ENCODE measurements at regions of chr6 and their contacts with region 1.

Region 1: DNA sequence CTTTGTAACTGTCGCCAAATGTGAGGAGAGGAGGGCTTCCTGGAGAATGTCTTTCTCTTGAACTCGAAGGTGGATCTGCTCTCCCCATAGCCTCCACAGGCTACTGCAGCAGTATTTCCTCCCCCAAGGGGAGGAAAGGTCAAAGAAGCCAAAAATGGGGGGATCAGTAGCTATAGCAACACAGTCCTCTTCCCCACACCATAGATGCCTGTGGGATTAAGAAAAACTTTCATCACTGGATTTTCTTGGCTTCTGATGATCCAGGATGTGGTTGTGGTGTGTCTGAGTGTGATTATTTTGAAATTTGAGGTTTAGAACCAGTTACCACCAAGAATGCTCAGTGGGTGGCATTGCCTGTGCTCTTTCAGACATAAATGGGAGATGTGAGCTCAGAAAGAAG is 140.1 kb upstream of the SPACA1 start:
- DNase-seq: peak; percentile 63
- ATAC-seq: peak; percentile 77
- H3K4me3 ChIP-seq: no peak overlapping the region
- H3K27ac ChIP-seq: peak overlapping the region; percentile 50; the same call in 1 of the 2 replicates
- H3K4me1 ChIP-seq: peaks cover 55% of the 10 kb centered on the region
- H3K27me3 ChIP-seq: no peaks in the 10 kb centered on the region
- CTCF ChIP-seq: no peak
- EP300 ChIP-seq: peak in 1 of 2 experiments; percentile 66; a peak in 2 of 4 replicates
- POLR2A ChIP-seq: no peak
- RAD21 ChIP-seq: 0 out of 2 replicates have a peak, but pooled peaks have one; percentile 6

Region 2: GRCh38 chr6:87808005-87808757 is 99.3 kb before region 1 on chr6:
- CTCF ChIA-PET with region 1: no interaction called
- POLR2A ChIA-PET with region 1: no interaction called
- RAD21 ChIA-PET with region 1: interaction called, 6 read pairs
- SMC1A ChIA-PET with region 1: interaction called, 10 read pairs
- in situ Hi-C with region 1: no loop called
- intact Hi-C with region 1: no loop called
- DNase-seq: no peak
- ATAC-seq: peak; percentile 45
- H3K4me3 ChIP-seq: no peak overlapping the region
- H3K27ac ChIP-seq: peak overlapping the region; percentile 43
- H3K4me1 ChIP-seq: peaks cover 27% of the 10 kb centered on the region
- H3K27me3 ChIP-seq: no peaks in the 10 kb centered on the region
- CTCF ChIP-seq: no peak
- EP300 ChIP-seq: no peak
- POLR2A ChIP-seq: no peak
- RAD21 ChIP-seq: no peak

Region 3: GRCh38 chr6:87887266-87887665 is 20.3 kb before region 1 on chr6:
- CTCF ChIA-PET with region 1: interaction called, 3 read pairs
- POLR2A ChIA-PET with region 1: interaction called, 4 read pairs
- RAD21 ChIA-PET with region 1: interaction called, 4 read pairs
- SMC1A ChIA-PET with region 1: interaction called, 11 read pairs
- in situ Hi-C with region 1: no loop called
- intact Hi-C with region 1: no loop called
- DNase-seq: no peak
- ATAC-seq: no peak
- H3K4me3 ChIP-seq: no peak overlapping the region
- H3K27ac ChIP-seq: no peak overlapping the region
- H3K4me1 ChIP-seq: no peaks in the 10 kb centered on the region
- H3K27me3 ChIP-seq: no peaks in the 10 kb centered on the region
- CTCF ChIP-seq: no peak
- EP300 ChIP-seq: no peak
- POLR2A ChIP-seq: no peak
- RAD21 ChIP-seq: no peak

Region 4: DNA sequence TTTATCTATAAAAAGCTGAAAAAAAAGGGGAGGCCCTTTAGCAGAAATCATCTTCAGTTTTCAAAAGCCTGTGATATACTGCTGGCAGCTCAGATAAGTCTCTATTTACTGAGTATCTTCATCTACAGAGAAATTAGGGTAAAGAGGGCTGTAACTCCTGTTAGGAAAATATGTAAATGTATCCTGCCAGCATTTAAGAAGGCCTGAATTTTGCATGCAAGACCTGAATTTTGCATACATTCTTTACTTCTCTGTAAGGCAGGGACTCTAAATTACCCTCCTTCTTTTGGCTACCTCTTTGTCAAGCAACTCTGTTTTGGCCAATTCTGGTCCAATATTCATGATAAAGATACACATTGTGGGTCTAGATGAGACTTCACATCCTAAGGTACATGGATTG is 10.5 kb before region 1 on chr6:
- CTCF ChIA-PET with region 1: no interaction called
- POLR2A ChIA-PET with region 1: interaction called, 4 read pairs
- RAD21 ChIA-PET with region 1: no interaction called
- SMC1A ChIA-PET with region 1: interaction called, 203 read pairs
- in situ Hi-C with region 1: no loop called
- intact Hi-C with region 1: no loop called
- DNase-seq: no peak
- ATAC-seq: no peak
- H3K4me3 ChIP-seq: no peak overlapping the region
- H3K27ac ChIP-seq: no peak overlapping the region
- H3K4me1 ChIP-seq: no peaks in the 10 kb centered on the region
- H3K27me3 ChIP-seq: no peaks in the 10 kb centered on the region
- CTCF ChIP-seq: no peak
- EP300 ChIP-seq: no peak
- POLR2A ChIP-seq: no peak
- RAD21 ChIP-seq: no peak

Region 5: GRCh38 chr6:87922947-87923330 is 15.4 kb after region 1 on chr6:
- CTCF ChIA-PET with region 1: interaction called, 51 read pairs
- POLR2A ChIA-PET with region 1: interaction called, 28 read pairs
- RAD21 ChIA-PET with region 1: interaction called, 79 read pairs
- SMC1A ChIA-PET with region 1: interaction called, 203 read pairs
- in situ Hi-C with region 1: no loop called
- intact Hi-C with region 1: loop called (anchors 1 kb)
- DNase-seq: peak; percentile 86
- ATAC-seq: peak; percentile 75
- H3K4me3 ChIP-seq: no peak overlapping the region
- H3K27ac ChIP-seq: peak overlapping the region; percentile 94
- H3K4me1 ChIP-seq: peaks cover 71% of the 10 kb centered on the region
- H3K27me3 ChIP-seq: no peaks in the 10 kb centered on the region
- CTCF ChIP-seq: no peak
- EP300 ChIP-seq: peak; percentile 84 to 90
- POLR2A ChIP-seq: peak; percentile 34; the same call in 1 of the 2 replicates
- RAD21 ChIP-seq: no peak

Region 6: GRCh38 chr6:87968435-87969278 is 61.1 kb after region 1 on chr6:
- CTCF ChIA-PET with region 1: no interaction called
- POLR2A ChIA-PET with region 1: no interaction called
- RAD21 ChIA-PET with region 1: no interaction called
- SMC1A ChIA-PET with region 1: no interaction called
- in situ Hi-C with region 1: no loop called
- intact Hi-C with region 1: no loop called
- DNase-seq: no peak
- ATAC-seq: peak; percentile 92
- H3K4me3 ChIP-seq: peak overlapping the region; percentile 58
- H3K27ac ChIP-seq: no peak overlapping the region
- H3K4me1 ChIP-seq: no peaks in the 10 kb centered on the region
- H3K27me3 ChIP-seq: no peaks in the 10 kb centered on the region
- CTCF ChIP-seq: peak; percentile 4 to 11 (median 5); a peak in 1 of 6 replicates
- EP300 ChIP-seq: no peak
- POLR2A ChIP-seq: no peak
- RAD21 ChIP-seq: no peak

Measured in GM12878 (cell line).